WTC11 (cell line): ENCODE measurements at regions of chr17 and their contacts with region 1.

Region 1: GRCh38 chr17:67942810-67943209 is 53.5 kb downstream of the C17orf58 start:
- DNase-seq: no peak
- ATAC-seq: peak; percentile 61
- H3K4me3 Mint-ChIP-seq: no peak overlapping the region
- H3K27ac Mint-ChIP-seq: no peak overlapping the region
- H3K4me1 Mint-ChIP-seq: no peaks in the 10 kb centered on the region
- H3K27me3 Mint-ChIP-seq: no peaks in the 10 kb centered on the region
- CTCF ChIP-seq: no peak

Region 2: GRCh38 chr17:67656494-67657203 is 286.2 kb before region 1 on chr17:
- CTCF ChIA-PET with region 1: no interaction called
- POLR2A ChIA-PET with region 1: no interaction called
- DNase-seq: no peak
- ATAC-seq: no peak
- H3K4me3 Mint-ChIP-seq: no peak overlapping the region
- H3K27ac Mint-ChIP-seq: no peak overlapping the region
- H3K4me1 Mint-ChIP-seq: no peaks in the 10 kb centered on the region
- H3K27me3 Mint-ChIP-seq: no peaks in the 10 kb centered on the region
- CTCF ChIP-seq: no peak

Region 3: GRCh38 chr17:67922503-67922902 is 20.3 kb before region 1 on chr17:
- CTCF ChIA-PET with region 1: interaction called, 12 read pairs
- POLR2A ChIA-PET with region 1: no interaction called
- DNase-seq: no peak
- ATAC-seq: no peak
- H3K4me3 Mint-ChIP-seq: no peak overlapping the region
- H3K27ac Mint-ChIP-seq: no peak overlapping the region
- H3K4me1 Mint-ChIP-seq: no peaks in the 10 kb centered on the region
- H3K27me3 Mint-ChIP-seq: no peaks in the 10 kb centered on the region
- CTCF ChIP-seq: no peak

Region 4: DNA sequence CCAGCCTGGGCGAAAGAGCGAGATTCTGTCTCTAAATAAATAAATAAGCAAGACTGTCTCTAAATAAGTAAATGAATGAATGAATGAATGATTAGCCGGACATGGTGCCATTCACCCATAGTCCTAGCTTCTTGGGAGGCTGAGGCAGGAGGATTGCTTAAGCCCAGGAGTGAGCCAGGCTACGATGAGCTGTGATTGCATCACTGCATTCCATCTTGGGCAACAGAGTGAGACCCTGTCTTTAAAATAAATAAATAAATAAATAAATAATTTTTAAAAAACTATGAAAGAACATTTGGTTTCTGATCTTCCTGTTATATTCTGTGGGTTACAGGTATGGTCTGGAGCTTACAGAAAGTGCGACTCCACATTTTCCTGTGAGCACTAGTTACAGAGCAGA is 11.6 kb before region 1 on chr17:
- CTCF ChIA-PET with region 1: interaction called, 18 read pairs
- POLR2A ChIA-PET with region 1: no interaction called
- DNase-seq: no peak
- ATAC-seq: no peak
- H3K4me3 Mint-ChIP-seq: no peak overlapping the region
- H3K27ac Mint-ChIP-seq: no peak overlapping the region
- H3K4me1 Mint-ChIP-seq: no peaks in the 10 kb centered on the region
- H3K27me3 Mint-ChIP-seq: no peaks in the 10 kb centered on the region
- CTCF ChIP-seq: no peak

Region 5: DNA sequence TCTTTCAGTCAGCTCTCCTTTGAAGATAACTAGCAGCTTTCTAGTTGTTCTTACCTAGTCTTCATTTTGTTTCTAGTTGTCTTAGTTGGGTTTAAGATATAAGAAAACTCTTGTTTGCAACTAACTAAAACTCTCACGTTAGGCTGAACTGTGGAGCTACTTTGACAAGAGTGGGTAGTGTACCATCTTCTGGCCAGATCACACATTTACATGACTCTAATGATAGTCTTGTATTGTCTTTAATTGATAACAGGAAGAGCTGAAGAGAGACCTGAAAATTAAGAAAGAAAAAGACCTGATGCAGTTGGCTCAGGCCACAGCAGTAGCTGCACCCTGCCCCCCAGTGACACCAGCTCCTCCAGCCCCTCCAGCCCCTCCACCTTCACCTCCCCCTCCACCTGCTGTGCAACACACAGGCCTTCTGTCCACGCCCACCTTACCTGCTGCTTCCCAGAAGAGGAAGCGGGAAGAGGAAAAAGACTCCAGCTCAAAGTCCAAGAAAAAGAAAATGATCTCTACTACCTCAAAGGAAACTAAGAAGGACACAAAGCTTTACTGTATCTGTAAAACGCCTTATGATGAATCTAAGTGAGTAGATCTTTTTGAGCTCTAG is 16.6 kb after region 1 on chr17:
- CTCF ChIA-PET with region 1: interaction called, 11 read pairs
- POLR2A ChIA-PET with region 1: interaction called, 3 read pairs
- DNase-seq: peak; percentile 25
- ATAC-seq: peak; percentile 70
- H3K4me3 Mint-ChIP-seq: no peak overlapping the region
- H3K27ac Mint-ChIP-seq: peak overlapping the region; percentile 86
- H3K4me1 Mint-ChIP-seq: peaks cover 11% of the 10 kb centered on the region
- H3K27me3 Mint-ChIP-seq: no peaks in the 10 kb centered on the region
- CTCF ChIP-seq: no peak